Dorsolateral prefrontal cortex (tissue), 120 donors: ENCODE measurements at regions of chr1 and their contacts with region 1.

Region 1: DNA sequence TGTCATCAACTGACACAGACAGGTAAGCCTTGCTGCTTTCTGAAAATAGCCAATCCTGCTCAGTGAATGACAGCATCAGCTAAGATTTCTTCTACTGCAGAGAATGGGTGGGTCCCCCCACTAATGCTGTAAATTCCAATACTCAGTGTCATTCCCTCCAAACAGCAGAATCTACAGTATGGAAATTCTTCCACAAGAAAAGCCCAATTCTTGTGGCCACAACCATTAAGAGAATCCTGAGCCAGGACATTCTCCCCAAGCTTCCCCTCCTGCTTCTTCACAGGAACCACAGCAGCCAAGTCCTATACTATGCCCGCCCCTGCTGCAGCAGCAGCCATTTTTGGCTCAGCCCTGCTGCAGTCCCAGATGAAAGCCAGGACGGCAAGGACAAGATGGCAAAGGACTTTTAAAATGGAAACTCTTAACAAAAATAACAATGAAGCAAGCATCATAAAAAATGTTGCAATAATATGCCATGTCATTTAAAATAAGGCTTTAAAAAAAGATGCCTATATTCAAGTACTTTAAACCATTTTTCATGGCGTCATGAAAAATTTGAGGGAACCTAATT is 26.8 kb downstream of the EIF4G3 start:
- DNase-seq: peak in 6 of 10 donors; percentile 39 to 67 (median 50)
- H3K4me3 ChIP-seq: peak overlapping the region in 35 of 59 donors; percentile 2 to 37 (median 22)
- H3K27ac ChIP-seq: peak overlapping the region; percentile 21 to 96 (median 86)
- H3K27me3 ChIP-seq: no peaks in the 10 kb centered on the region
- CTCF ChIP-seq: no peak

Region 2: DNA sequence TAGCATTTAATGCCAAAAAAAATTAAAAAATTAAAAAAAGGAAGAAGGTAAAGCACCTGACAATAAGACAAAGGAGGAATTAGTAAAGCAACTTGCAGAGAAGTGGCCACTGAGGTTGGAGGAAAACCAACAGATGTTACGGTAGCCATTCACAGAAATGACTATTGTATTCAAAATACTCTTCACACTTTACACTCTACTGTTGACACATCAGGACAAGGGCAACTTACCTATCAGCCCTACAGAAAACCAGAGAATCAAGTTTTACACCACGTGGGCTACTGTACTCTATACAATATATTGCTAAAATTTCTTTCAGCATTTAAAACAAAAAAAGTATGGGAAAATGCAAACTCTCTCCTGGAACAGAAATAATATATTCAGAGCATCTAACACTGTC is 43.2 kb before region 1 on chr1:
- intact Hi-C with region 1: loop called in 1 of 2 experiments (anchors 5 kb)
- DNase-seq: no peak
- H3K4me3 ChIP-seq: no peak overlapping the region
- H3K27ac ChIP-seq: peak overlapping the region in 2 of 59 donors; percentile 2 to 4
- H3K27me3 ChIP-seq: no peaks in the 10 kb centered on the region
- CTCF ChIP-seq: no peak

Region 3: GRCh38 chr1:22451702-22452474 is 1301.9 kb after region 1 on chr1 and contains the start of gene ZBTB40:
- intact Hi-C with region 1: no loop called
- DNase-seq: peak; percentile 94 to 98 (median 96)
- H3K4me3 ChIP-seq: peak within 1 kb of the TSS; percentile 67 to 100 (median 93)
- H3K27ac ChIP-seq: peak within 1 kb of the TSS; percentile 65 to 99 (median 95)
- H3K27me3 ChIP-seq: no peaks in the 10 kb centered on the region
- CTCF ChIP-seq: peak in 27 of 56 donors; percentile 5 to 44 (median 21)
- total RNA-seq, gene ZBTB40: 12.6 to 33.7 (median 21.8) TPM